ENCODE measurements at regions of chr19 and their contacts with region 1.

Region 1: GRCh38 chr19:38142176-38143035 is 81.6 kb downstream of the DPF1 start:
- DNase-seq: peak; percentile 81 to 98
- ATAC-seq: peak; percentile 84 to 90
- H3K4me3 ChIP-seq: no peak overlapping the region
- H3K27ac ChIP-seq: no peak overlapping the region
- H3K4me1 ChIP-seq: no peaks in the 10 kb centered on the region
- CTCF ChIP-seq: peak; percentile 86
- EP300 ChIP-seq: no peak
- POLR2A ChIP-seq: no peak
- RAD21 ChIP-seq: peak; percentile 73 to 91

Region 2: DNA sequence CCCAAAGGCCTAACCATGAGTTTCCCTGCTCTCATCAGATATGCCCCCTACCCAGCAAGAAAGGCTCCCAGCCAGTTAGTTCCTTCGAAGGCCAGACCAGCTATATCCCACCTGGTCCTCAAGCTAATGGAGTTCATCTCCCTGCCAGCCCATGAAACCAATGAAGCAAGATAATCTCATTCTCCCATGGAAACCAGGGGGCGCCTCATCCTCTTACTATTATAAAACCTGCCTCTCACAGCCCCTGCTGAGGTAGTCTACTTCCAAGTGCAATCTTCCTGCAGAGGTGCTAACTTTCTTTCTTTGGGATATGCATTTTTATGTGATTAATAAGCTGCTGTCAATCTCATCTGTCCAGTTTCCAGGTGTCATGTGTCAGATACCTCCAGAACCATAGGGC is 329.1 kb before region 1 on chr19:
- CTCF ChIA-PET with region 1: no interaction called
- POLR2A ChIA-PET with region 1: no interaction called
- DNase-seq: no peak
- ATAC-seq: no peak
- H3K4me3 ChIP-seq: no peak overlapping the region
- H3K27ac ChIP-seq: no peak overlapping the region
- H3K4me1 ChIP-seq: no peaks in the 10 kb centered on the region
- CTCF ChIP-seq: no peak
- EP300 ChIP-seq: no peak
- POLR2A ChIP-seq: no peak
- RAD21 ChIP-seq: no peak

Region 3: DNA sequence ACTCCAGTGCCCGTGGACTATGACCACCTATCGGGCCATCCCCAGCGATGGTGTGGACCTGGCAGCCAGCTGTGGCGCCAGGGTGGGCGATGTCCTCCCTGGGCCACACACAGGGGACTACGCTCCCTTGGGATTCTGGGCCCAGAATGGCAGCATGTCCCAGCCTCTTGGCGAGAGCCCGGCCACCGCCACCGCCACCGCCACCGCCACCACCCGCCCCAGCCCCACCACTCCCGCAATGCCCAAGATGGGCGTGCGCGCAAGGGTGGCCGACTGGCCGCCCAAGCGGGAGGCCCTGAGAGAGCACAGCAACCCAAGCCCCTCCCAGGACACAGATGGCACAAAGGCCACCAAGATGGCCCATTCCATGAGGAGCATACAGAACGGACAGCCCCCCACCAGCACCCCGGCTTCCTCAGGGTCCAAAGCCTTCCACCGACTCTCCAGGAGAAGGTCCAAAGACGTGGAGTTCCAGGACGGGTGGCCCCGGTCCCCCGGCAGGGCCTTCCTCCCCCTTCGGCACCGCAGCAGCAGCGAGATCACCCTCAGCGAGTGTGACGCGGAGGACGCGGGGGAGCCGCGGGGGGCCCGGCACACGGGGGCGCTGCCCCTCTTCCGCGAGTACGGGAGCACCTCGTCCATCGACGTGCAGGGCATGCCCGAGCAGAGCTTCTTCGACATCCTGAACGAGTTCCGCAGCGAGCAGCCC is 60.7 kb before region 1 on chr19:
- CTCF ChIA-PET with region 1: no interaction called
- POLR2A ChIA-PET with region 1: no interaction called
- DNase-seq: no peak
- ATAC-seq: no peak
- H3K4me3 ChIP-seq: no peak overlapping the region
- H3K27ac ChIP-seq: 0 out of 6 replicates have a peak overlapping the region, but pooled peaks of 1 of the 2 experiments have one; percentile 2
- H3K4me1 ChIP-seq: peaks cover 20% of the 10 kb centered on the region
- CTCF ChIP-seq: no peak
- EP300 ChIP-seq: no peak
- POLR2A ChIP-seq: no peak
- RAD21 ChIP-seq: no peak

Region 4: GRCh38 chr19:38095411-38096308 is 46.7 kb before region 1 on chr19:
- CTCF ChIA-PET with region 1: interaction called, 17 read pairs
- POLR2A ChIA-PET with region 1: no interaction called
- DNase-seq: peak; percentile 86 to 87
- ATAC-seq: peak; percentile 87 to 89
- H3K4me3 ChIP-seq: no peak overlapping the region
- H3K27ac ChIP-seq: peak overlapping the region in 1 of 2 experiments; percentile 35; a peak in 1 of 6 replicates
- H3K4me1 ChIP-seq: no peaks in the 10 kb centered on the region
- CTCF ChIP-seq: peak; percentile 97
- EP300 ChIP-seq: no peak
- POLR2A ChIP-seq: peak; percentile 8; the same call in 1 of the 2 replicates
- RAD21 ChIP-seq: peak; percentile 82 to 83

Region 5: DNA sequence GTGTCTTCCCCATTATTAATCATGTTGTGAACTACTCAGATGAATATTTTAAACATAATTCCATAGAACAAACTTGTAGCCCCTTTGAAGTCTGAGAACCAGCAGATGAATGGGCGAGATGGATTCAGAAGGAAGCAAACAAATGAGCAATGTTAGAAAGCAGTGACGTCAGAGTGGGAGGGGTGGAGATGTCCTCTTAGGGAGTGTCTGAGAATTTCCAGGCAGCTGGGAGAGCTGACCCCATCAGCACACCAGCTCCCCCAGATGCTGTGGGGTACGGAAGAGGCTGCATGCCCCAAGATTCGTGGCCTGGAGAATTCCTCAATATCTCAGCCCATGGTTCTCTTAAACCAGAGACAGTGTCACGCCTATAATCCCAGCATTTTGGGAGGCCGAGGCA is 13.0 kb after region 1 on chr19:
- CTCF ChIA-PET with region 1: interaction called, 67 read pairs
- POLR2A ChIA-PET with region 1: interaction called, 4 read pairs
- DNase-seq: peak in 1 of 2 experiments; percentile 59
- ATAC-seq: peak in 1 of 2 experiments; percentile 34; a peak in 3 of 6 replicates
- H3K4me3 ChIP-seq: no peak overlapping the region
- H3K27ac ChIP-seq: no peak overlapping the region
- H3K4me1 ChIP-seq: no peaks in the 10 kb centered on the region
- CTCF ChIP-seq: no peak
- EP300 ChIP-seq: no peak
- POLR2A ChIP-seq: no peak
- RAD21 ChIP-seq: no peak

Region 6: DNA sequence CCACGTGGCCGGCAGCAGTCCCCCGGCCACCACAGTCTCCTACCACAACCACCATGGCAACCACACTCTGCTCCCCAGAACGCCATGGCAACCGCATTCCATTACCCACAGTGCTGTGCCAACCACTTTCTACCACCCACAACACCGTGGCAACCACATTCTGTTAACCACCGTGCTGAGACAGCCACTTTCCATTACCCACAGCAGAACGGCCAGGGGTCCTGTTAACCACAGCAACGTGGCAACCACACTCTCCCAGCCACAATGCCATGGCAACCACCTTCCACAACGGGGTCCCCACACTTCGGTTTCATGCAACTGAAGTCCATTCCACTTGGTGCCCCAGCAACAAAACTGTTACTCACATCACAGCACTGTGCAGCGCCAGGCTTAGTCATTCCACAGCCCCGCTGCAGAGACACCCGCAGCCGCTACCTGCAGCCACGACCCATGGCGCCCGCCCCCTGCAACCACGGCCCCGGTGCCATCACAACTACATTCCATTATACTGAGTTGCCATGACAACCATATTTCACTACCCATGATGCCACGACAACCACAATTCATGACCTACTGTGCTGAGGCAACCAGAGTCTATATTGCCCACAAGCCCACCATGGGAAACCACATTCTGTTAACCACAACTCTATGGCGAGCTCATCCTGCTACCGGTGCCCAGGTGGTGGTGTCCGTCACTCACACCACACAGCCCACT is 71.7 kb after region 1 on chr19:
- CTCF ChIA-PET with region 1: interaction called, 15 read pairs
- POLR2A ChIA-PET with region 1: no interaction called
- DNase-seq: peak in 1 of 2 experiments; percentile 81
- ATAC-seq: peak; percentile 37 to 46
- H3K4me3 ChIP-seq: no peak overlapping the region
- H3K27ac ChIP-seq: no peak overlapping the region
- H3K4me1 ChIP-seq: peaks cover 24% of the 10 kb centered on the region; the same call in 2 of the 3 replicates
- CTCF ChIP-seq: no peak
- EP300 ChIP-seq: no peak
- POLR2A ChIP-seq: no peak
- RAD21 ChIP-seq: no peak